Ascending aorta (tissue), 2 donors: ENCODE measurements at regions of chr10 and their contacts with region 1.

Region 1: DNA sequence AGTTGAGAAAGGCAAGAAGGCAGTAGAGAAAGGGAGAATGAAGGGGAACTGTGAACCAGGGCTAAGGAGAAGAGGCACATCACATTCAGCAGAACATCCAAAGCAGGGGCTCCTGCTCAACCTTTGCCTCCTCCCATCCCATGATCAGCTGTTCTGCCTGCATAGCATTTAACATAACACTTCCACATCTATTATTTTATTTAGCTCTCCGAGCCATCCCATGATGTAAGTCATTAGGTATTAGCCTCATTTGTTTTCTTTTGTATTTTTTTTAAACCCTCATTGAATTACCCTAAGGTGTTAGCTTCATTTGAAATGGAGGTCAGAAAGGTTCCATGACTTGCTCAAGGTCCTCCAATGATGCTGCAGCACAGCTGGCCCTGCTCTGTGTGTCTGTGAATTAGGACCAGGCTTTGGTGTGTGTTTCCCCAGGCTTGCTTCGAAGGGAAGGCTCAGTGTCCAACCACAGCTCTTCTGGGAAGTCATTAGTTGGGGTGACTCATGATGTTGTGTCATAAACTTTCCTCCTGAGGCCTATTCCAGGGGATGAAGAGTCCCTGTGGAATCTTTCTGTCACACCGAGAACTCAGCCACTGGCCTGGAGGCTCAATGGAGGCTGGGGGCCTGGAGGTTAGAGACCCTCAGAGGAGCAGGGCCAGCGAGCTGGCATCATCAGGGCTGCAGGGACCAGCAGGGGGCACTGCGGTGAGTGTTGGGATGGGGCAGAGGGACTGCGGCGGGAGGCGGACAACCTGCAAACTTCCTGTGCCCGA is 16.5 kb downstream of the NPFFR1 start:
- DNase-seq: no peak
- H3K4me3 ChIP-seq: no peak overlapping the region
- H3K27ac ChIP-seq: no peak overlapping the region
- H3K4me1 ChIP-seq: no peaks in the 10 kb centered on the region
- H3K27me3 ChIP-seq: no peaks in the 10 kb centered on the region
- CTCF ChIP-seq: no peak

Region 2: DNA sequence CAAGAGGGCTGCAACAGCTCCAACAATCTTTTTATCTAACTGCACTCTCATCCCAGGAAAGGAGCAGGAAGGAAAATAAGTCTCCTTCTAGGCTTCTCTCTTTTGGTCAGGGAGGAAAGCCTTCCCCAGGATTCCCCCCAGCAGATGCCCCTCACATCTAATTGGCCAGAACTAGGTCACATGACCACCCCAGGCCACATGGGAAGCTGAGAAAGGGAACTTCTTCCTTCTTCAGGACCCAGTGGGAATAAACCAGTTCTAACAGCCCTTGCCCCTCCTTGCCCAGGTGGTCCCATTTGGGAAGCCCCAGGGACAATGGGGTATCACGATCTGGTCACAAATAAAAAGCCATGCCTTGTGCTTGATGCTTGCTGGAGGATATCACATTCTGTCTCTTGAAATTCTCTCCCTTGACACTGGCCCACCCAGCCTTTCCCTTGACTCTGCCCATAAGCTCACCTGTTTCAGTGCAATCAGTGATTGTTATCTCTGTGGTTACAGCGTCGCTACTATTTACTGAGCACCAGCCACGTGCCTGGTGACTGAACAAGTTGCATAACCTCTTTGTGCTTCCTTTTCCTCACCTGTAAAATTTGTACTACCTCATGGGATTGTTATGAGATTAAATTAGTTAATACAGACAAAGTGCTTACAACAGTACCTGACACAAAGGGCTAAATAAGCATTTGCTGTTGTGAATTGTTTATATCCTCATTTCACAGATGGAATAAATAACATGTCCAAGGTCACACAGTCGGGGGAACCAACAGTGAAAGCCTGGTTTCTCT is 841.6 kb before region 1 on chr10:
- intact Hi-C with region 1: no loop called
- DNase-seq: no peak
- H3K4me3 ChIP-seq: no peak overlapping the region
- H3K27ac ChIP-seq: no peak overlapping the region
- H3K4me1 ChIP-seq: no peaks in the 10 kb centered on the region
- H3K27me3 ChIP-seq: no peaks in the 10 kb centered on the region
- CTCF ChIP-seq: no peak

Region 3: DNA sequence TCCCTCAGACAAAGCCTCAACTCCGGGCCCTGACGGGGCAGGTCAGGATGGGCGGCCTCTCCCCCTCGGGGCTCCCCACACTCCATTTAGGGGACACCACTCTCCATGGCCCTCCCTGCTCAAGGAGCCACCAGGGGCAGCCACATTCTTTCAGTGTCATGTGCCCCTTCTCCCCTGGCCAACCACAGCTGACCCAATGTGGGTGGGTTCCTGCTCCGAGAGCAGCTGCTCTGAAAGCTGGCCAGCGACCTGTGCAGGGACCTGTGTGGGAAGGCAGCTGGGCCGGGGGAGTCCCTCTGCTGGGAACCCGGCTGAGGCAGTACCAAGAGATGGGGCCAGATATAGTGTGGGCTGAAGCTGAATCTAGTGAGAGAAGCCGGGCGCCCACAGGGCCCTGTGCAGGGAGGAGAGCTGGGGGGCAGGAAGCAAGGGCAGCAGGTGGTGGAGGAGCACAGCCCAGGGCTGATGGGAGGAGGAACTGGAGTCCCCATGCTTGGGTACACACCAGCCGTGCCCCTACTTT is 57.1 kb after region 1 on chr10:
- intact Hi-C with region 1: loop called (anchors 10 kb)
- DNase-seq: no peak
- H3K4me3 ChIP-seq: no peak overlapping the region
- H3K27ac ChIP-seq: no peak overlapping the region
- H3K4me1 ChIP-seq: no peaks in the 10 kb centered on the region
- H3K27me3 ChIP-seq: no peaks in the 10 kb centered on the region
- CTCF ChIP-seq: no peak